GM12878 (cell line): ENCODE measurements at regions of chr3 and their contacts with region 1.

Region 1: DNA sequence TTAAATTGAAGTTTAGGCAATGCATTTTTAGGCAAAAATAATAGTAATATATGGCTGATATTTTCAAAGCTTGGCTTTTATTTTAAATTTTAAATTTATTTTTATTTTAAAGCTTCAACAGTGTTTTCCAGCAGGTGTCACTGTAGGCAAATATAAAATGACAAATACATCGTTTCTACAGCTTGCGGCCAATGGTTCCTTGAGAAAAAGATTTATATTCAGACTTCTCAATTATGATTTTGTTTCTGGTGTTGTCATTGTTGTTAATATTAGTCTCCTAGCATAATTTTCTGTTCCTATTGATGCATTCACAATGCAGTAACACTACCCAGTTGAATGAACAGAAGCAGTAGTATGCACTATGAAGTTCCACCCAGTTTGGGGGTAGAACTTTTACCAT is 220.7 kb upstream of the DNAJC19 start:
- DNase-seq: no peak
- ATAC-seq: no peak
- H3K4me3 ChIP-seq: no peak overlapping the region
- H3K27ac ChIP-seq: no peak overlapping the region
- H3K4me1 ChIP-seq: no peaks in the 10 kb centered on the region
- H3K27me3 ChIP-seq: no peaks in the 10 kb centered on the region; a peak in 1 of 4 replicates
- CTCF ChIP-seq: no peak; a peak in 1 of 6 replicates
- EP300 ChIP-seq: no peak
- POLR2A ChIP-seq: no peak
- RAD21 ChIP-seq: peak; percentile 48; the same call in 1 of the 2 replicates

Region 2: GRCh38 chr3:181189556-181189955 is 20.7 kb before region 1 on chr3:
- CTCF ChIA-PET with region 1: no interaction called
- POLR2A ChIA-PET with region 1: no interaction called
- RAD21 ChIA-PET with region 1: no interaction called
- SMC1A ChIA-PET with region 1: no interaction called
- in situ Hi-C with region 1: no loop called
- intact Hi-C with region 1: no loop called
- DNase-seq: no peak
- ATAC-seq: no peak
- H3K4me3 ChIP-seq: no peak overlapping the region
- H3K27ac ChIP-seq: no peak overlapping the region
- H3K4me1 ChIP-seq: no peaks in the 10 kb centered on the region
- H3K27me3 ChIP-seq: no peaks in the 10 kb centered on the region
- CTCF ChIP-seq: no peak
- EP300 ChIP-seq: no peak
- POLR2A ChIP-seq: no peak
- RAD21 ChIP-seq: no peak

Region 3: DNA sequence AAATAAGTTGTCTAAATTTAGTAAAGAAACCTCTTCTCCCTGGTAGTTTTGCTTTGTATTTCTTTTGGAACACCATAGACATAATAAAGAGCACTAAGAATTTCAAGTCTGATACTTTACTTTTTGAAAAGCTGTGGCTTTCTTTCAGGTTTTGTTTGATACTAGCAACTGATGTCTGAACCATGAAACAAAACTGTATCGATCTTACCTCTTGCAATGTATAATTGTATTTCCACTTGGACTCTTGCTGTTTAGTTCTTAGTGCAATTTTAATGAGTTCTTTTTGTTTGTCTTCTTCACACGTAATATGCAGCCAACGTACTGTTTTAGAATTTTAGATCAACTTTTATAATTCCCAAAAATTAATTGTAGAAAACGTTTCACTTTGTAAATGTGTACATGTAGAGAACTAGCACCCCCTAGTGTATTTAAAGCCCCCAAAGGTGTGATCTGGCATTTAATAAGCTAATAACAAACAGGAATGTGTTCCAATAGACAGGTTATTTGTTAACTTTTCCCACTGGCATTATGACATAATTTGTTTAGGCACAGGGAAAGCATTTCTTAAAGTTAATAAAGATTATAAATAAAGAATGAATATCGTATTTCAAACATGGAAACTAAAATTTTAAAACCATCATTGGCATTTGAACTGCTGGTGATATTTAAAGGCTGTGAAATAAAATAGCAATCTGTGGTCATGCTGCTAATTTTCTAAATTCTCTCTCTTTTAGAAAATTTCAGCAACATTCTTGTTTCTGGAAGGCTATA is 68.4 kb after region 1 on chr3:
- CTCF ChIA-PET with region 1: interaction called, 11 read pairs
- POLR2A ChIA-PET with region 1: no interaction called
- RAD21 ChIA-PET with region 1: interaction called, 6 read pairs
- SMC1A ChIA-PET with region 1: interaction called, 3 read pairs
- in situ Hi-C with region 1: no loop called
- intact Hi-C with region 1: no loop called
- DNase-seq: no peak
- ATAC-seq: no peak; the same call in 2 of the 3 replicates
- H3K4me3 ChIP-seq: no peak overlapping the region
- H3K27ac ChIP-seq: no peak overlapping the region
- H3K4me1 ChIP-seq: no peaks in the 10 kb centered on the region
- H3K27me3 ChIP-seq: no peaks in the 10 kb centered on the region
- CTCF ChIP-seq: peak in 2 of 3 experiments; percentile 7 to 46; a peak in 4 of 6 replicates
- EP300 ChIP-seq: no peak
- POLR2A ChIP-seq: no peak
- RAD21 ChIP-seq: peak; percentile 52

Region 4: GRCh38 chr3:181694805-181695660 is 484.8 kb after region 1 on chr3:
- CTCF ChIA-PET with region 1: interaction called, 12 read pairs
- POLR2A ChIA-PET with region 1: no interaction called
- RAD21 ChIA-PET with region 1: interaction called, 6 read pairs
- SMC1A ChIA-PET with region 1: interaction called, 9 read pairs
- in situ Hi-C with region 1: loop called (anchors 10 kb)
- intact Hi-C with region 1: loop called (anchors 1 kb)
- DNase-seq: no peak
- ATAC-seq: no peak; the same call in 2 of the 3 replicates
- H3K4me3 ChIP-seq: no peak overlapping the region
- H3K27ac ChIP-seq: no peak overlapping the region
- H3K4me1 ChIP-seq: no peaks in the 10 kb centered on the region
- H3K27me3 ChIP-seq: peaks cover 8 to 15% of the 10 kb centered on the region in 2 experiments
- CTCF ChIP-seq: no peak
- EP300 ChIP-seq: no peak
- POLR2A ChIP-seq: no peak
- RAD21 ChIP-seq: no peak